Panc1 (cell line): ENCODE measurements at regions of chr7 and their contacts with region 1.

Region 1: GRCh38 chr7:421136-421991 is 98.3 kb downstream of the PDGFA start:
- DNase-seq: no peak
- ATAC-seq: no peak
- H3K4me3 ChIP-seq: no peak overlapping the region
- H3K27ac ChIP-seq: no peak overlapping the region
- H3K4me1 ChIP-seq: no peaks in the 10 kb centered on the region
- H3K27me3 ChIP-seq: no peaks in the 10 kb centered on the region; the same call in 1 of the 2 replicates
- CTCF ChIP-seq: no peak

Region 2: GRCh38 chr7:347644-348479 is 73.5 kb before region 1 on chr7:
- CTCF ChIA-PET with region 1: no interaction called
- POLR2A ChIA-PET with region 1: interaction called, 10 read pairs
- in situ Hi-C with region 1: no loop called
- intact Hi-C with region 1: no loop called
- DNase-seq: no peak
- ATAC-seq: no peak
- H3K4me3 ChIP-seq: no peak overlapping the region
- H3K27ac ChIP-seq: no peak overlapping the region
- H3K4me1 ChIP-seq: peaks cover 9% of the 10 kb centered on the region
- H3K27me3 ChIP-seq: no peaks in the 10 kb centered on the region
- CTCF ChIP-seq: no peak